Left cardiac atrium (tissue), 4 donors: ENCODE measurements at regions of chr2 and their contacts with region 1.

Region 1: GRCh38 chr2:238352361-238352760 is 32.0 kb downstream of the TRAF3IP1 start:
- DNase-seq: no peak
- ATAC-seq: no peak

Region 2: DNA sequence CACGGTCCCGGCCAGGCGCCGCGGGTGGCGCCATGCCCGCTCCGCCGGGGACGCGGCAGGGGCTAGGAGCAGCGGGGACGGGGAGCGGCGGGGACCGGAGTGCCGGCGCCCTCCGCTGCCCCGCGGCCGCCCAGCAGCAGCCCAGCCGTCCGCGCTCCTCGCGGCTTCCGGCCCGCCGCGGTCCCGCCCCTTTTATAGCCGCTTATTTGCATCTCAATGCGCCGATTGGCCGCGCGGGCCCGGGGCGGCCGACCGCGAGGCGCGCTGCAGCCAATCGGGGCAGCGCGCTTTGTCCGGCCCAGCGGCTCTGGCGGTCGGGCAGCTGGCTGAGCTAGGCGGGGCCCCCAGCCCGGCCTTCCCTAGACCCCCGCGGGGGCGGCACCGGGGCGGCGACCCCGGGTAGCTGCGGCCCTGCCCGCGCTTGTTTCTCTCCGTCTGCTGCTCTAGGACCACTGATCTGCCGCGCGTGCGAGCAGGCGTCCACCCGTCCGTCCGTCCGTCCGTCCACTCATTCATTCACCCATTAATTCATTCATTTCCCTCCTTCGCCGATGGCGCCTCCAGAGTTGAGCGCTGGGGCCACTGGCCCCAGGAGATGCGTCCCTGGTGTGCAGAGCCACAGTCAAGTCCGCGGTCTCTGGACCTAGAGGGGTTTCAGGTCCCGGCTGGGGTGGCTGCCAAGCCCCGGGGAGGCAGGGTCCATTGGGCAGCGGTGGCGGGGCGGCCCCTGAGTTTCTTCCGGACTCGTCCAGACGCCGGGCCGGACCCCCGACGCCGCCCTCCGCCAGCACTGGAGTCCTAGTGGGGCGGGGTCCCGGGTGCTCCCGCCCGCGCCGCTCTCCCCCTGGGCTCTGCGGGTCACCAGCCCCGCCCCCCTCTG is 112.2 kb before region 1 on chr2 and contains the start of gene HES6:
- intact Hi-C with region 1: no loop called
- DNase-seq: peak; percentile 93
- ATAC-seq: peak; percentile 88 to 89
- total RNA-seq, gene HES6: 3.8 to 4.3 TPM

Region 3: GRCh38 chr2:238970553-238971081 is 618.3 kb after region 1 on chr2:
- intact Hi-C with region 1: loop called in 1 of 2 experiments (anchors 10 kb)
- DNase-seq: peak; percentile 54
- ATAC-seq: peak; percentile 65 to 78